ENCODE measurements at regions of chr20 and their contacts with region 1.

Region 1: DNA sequence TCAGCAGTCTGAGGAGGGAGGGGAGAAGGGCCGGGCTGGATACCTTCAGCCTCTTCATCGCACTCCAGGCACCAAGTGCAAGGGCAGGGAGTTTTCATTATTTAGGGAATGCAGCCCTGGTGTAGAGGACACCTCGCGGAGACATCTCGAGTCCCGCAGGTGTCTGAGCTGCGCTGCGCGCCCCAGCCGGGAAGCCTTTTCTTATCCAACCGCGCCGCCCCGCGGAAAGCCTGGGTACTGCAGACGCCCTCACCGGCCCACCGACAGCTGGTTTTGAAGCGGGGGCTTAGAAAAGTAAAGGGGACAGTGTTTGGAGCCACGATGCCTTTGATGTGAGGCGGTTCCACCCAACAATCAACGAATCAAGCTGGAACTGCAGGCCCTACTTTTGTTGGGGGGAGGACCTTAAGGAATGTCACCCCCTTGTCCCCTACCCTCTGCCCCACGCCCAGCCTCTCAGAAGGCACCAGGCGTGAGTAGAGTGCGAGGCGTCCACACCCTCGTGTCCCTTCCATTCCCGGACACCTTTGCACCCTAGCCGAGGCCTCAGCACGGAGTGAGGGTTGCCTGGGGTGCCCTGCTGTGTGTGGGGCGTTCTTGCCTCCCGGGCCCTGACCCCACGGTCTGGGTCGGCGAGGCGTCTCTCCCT is 8.6 kb downstream of the NKX2-2 start:
- DNase-seq: peak; percentile 51 to 86 (median 76)
- ATAC-seq: peak; percentile 82
- H3K4me3 ChIP-seq: peak overlapping the region; percentile 55
- H3K4me3 Mint-ChIP-seq: peak overlapping the region; percentile 53 to 80 (median 72)
- H3K27ac ChIP-seq: no peak overlapping the region
- H3K27ac Mint-ChIP-seq: peak overlapping the region in 2 of 9 donors; percentile 20 to 74
- H3K4me1 ChIP-seq: peaks cover 10 to 16% of the 10 kb centered on the region in 2 donors
- H3K4me1 Mint-ChIP-seq: peaks cover 0 to 40% (median 32%) of the 10 kb centered on the region in 7 donors
- H3K27me3 ChIP-seq: peaks cover 7 to 29% of the 10 kb centered on the region in 2 donors
- H3K27me3 Mint-ChIP-seq: peaks cover 52 to 60% (median 55%) of the 10 kb centered on the region in 5 donors

Region 2: GRCh38 chr20:20083807-20084206 is 1421.5 kb before region 1 on chr20:
- CTCF ChIA-PET with region 1: no interaction called
- POLR2A ChIA-PET with region 1: no interaction called
- intact Hi-C with region 1: loop called in 1 of 2 experiments (anchors 10 kb)
- DNase-seq: peak in 6 of 9 donors; percentile 4 to 64 (median 44)
- ATAC-seq: peak; percentile 74
- H3K4me3 ChIP-seq: no peak overlapping the region
- H3K4me3 Mint-ChIP-seq: peak overlapping the region in 7 of 10 donors; percentile 46 to 86 (median 72)
- H3K27ac ChIP-seq: no peak overlapping the region
- H3K27ac Mint-ChIP-seq: peak overlapping the region in 6 of 9 donors; percentile 23 to 80 (median 52)
- H3K4me1 ChIP-seq: no peaks in the 10 kb centered on the region
- H3K4me1 Mint-ChIP-seq: peaks cover 0 to 9% (median 8%) of the 10 kb centered on the region in 7 donors
- H3K27me3 ChIP-seq: no peaks in the 10 kb centered on the region
- H3K27me3 Mint-ChIP-seq: peaks cover 0 to 16% (median 9%) of the 10 kb centered on the region in 5 donors

Region 3: GRCh38 chr20:20780127-20780824 is 725.0 kb before region 1 on chr20:
- CTCF ChIA-PET with region 1: no interaction called
- POLR2A ChIA-PET with region 1: no interaction called
- intact Hi-C with region 1: no loop called
- DNase-seq: no peak
- ATAC-seq: peak; percentile 90
- H3K4me3 ChIP-seq: no peak overlapping the region
- H3K4me3 Mint-ChIP-seq: no peak overlapping the region
- H3K27ac ChIP-seq: no peak overlapping the region
- H3K27ac Mint-ChIP-seq: no peak overlapping the region
- H3K4me1 ChIP-seq: no peaks in the 10 kb centered on the region
- H3K4me1 Mint-ChIP-seq: peaks cover 0 to 2% (median 0%) of the 10 kb centered on the region in 7 donors
- H3K27me3 ChIP-seq: no peaks in the 10 kb centered on the region
- H3K27me3 Mint-ChIP-seq: peaks cover 0 to 14% (median 4%) of the 10 kb centered on the region in 5 donors

Region 4: GRCh38 chr20:20860078-20860806 is 645.0 kb before region 1 on chr20:
- CTCF ChIA-PET with region 1: interaction called, 23 read pairs
- POLR2A ChIA-PET with region 1: no interaction called
- intact Hi-C with region 1: no loop called
- DNase-seq: peak; percentile 44 to 80 (median 64)
- ATAC-seq: peak; percentile 81
- H3K4me3 ChIP-seq: no peak overlapping the region
- H3K4me3 Mint-ChIP-seq: no peak overlapping the region
- H3K27ac ChIP-seq: no peak overlapping the region
- H3K27ac Mint-ChIP-seq: no peak overlapping the region
- H3K4me1 ChIP-seq: no peaks in the 10 kb centered on the region
- H3K4me1 Mint-ChIP-seq: peaks cover 0 to 1% (median 0%) of the 10 kb centered on the region in 7 donors
- H3K27me3 ChIP-seq: no peaks in the 10 kb centered on the region
- H3K27me3 Mint-ChIP-seq: peaks cover 13 to 38% (median 31%) of the 10 kb centered on the region in 5 donors

Region 5: DNA sequence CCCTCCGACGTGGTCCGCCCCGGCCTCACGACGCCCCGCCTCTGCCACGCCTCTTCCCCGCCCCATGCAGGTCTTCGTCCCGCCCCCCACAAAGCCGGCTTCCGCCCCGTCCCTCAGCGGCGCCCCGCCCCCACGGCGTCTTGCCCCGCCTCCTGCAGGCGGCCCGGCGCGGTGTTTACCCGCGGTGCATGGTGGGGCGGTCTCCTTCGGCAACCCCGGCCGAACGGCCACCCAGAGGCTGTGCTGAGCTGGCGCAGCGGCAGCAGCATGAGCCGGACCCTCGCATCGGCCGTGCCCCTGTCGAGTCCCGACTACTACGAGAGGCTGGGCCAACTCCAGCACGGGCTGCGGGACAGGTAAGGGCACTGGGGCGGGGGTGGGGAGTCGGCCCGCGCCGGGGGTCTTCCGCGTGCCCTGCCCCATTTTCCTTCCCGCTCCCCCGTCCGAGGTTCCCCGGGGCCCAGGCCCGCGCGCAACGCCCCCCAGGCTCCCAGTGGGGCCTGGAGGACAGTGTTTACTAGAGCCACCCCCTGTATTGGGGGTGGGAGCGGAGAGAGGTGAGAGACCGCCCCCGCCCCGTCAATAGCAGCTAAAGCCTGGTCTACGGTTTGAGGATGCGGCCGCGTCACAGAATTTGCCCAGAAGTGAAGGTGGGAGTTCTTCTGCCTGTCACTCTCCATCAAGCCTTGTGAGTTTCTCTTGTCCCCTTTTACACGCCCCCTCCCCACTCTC is 379.3 kb before region 1 on chr20 and contains the start of gene KIZ:
- CTCF ChIA-PET with region 1: no interaction called
- POLR2A ChIA-PET with region 1: no interaction called
- intact Hi-C with region 1: loop called in 1 of 2 experiments (anchors 5 kb)
- DNase-seq: peak; percentile 93 to 100 (median 97)
- ATAC-seq: peak; percentile 100
- H3K4me3 ChIP-seq: peak within 1 kb of the TSS; percentile 56
- H3K4me3 Mint-ChIP-seq: peak within 1 kb of the TSS; percentile 86 to 98 (median 90)
- H3K27ac ChIP-seq: peak within 1 kb of the TSS; percentile 77
- H3K27ac Mint-ChIP-seq: peak within 1 kb of the TSS; percentile 70 to 97 (median 88)
- H3K4me1 ChIP-seq: peaks cover 10 to 16% of the 10 kb centered on the region in 2 donors
- H3K4me1 Mint-ChIP-seq: peaks cover 11 to 35% (median 21%) of the 10 kb centered on the region in 7 donors
- H3K27me3 ChIP-seq: no peaks in the 10 kb centered on the region
- H3K27me3 Mint-ChIP-seq: peaks cover 0 to 4% (median 0%) of the 10 kb centered on the region in 5 donors
- total RNA-seq, gene KIZ: 15.6 to 47.4 (median 32.5) TPM

Region 6: GRCh38 chr20:21361266-21361665 is 144.0 kb before region 1 on chr20:
- CTCF ChIA-PET with region 1: no interaction called
- POLR2A ChIA-PET with region 1: no interaction called
- intact Hi-C with region 1: no loop called
- DNase-seq: no peak
- ATAC-seq: peak; percentile 40
- H3K4me3 ChIP-seq: no peak overlapping the region
- H3K4me3 Mint-ChIP-seq: peak overlapping the region in 1 of 10 donors; percentile 12
- H3K27ac ChIP-seq: no peak overlapping the region
- H3K27ac Mint-ChIP-seq: peak overlapping the region in 3 of 9 donors; percentile 18 to 37 (median 36)
- H3K4me1 ChIP-seq: no peaks in the 10 kb centered on the region
- H3K4me1 Mint-ChIP-seq: peaks cover 0 to 17% (median 6%) of the 10 kb centered on the region in 7 donors
- H3K27me3 ChIP-seq: no peaks in the 10 kb centered on the region
- H3K27me3 Mint-ChIP-seq: no peaks in the 10 kb centered on the region

Region 7: DNA sequence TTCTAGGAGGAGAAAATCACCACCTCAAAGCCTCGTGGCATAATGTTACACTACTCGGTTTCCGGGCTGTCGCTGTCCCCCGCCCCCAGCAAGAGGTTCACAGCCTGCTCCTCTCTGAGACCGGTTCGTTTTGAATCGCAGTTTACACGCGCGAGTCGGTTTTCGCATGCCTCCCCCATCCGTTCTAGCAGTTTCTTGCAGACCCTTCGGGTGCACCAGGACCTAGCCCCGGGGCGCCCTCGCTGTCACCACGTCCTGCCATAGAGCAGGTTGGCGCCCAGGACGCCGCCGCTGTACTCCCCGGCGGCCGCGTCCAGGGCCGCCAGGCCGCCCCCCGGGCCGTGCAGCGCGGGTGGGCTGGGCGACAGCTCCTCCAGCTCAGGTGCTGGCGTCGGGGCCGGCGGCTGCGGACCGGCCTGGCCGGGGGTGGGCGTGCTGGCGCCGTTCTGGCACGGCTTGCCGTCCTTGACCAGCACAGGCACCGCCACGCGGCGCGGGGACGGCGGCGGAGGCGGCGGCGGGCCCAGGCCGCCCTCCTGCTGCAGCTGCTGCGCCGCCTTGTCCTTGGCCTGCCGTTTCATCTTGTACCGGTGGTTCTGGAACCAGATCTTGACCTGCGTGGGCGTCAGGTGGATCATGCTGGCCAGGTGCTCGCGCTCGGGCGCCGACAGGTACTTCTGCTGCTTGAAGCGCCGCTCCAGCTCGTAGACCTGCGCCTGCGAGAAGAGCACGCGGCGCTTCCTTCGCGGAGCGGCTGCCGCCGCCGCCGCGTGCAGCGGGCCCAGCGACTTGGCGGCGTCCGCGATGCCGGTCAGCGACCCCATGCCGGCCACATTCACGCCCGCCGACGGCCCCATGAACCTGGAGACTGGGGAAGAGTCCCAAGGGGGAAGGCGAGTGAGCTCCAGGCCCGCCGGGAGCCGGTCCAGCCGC is 109.4 kb before region 1 on chr20:
- CTCF ChIA-PET with region 1: no interaction called
- POLR2A ChIA-PET with region 1: no interaction called
- intact Hi-C with region 1: loop called (anchors 2 to 5 kb)
- DNase-seq: peak; percentile 21 to 77 (median 67)
- ATAC-seq: peak; percentile 86
- H3K4me3 ChIP-seq: no peak overlapping the region
- H3K4me3 Mint-ChIP-seq: peak overlapping the region; percentile 39 to 85 (median 76)
- H3K27ac ChIP-seq: no peak overlapping the region
- H3K27ac Mint-ChIP-seq: peak overlapping the region in 6 of 9 donors; percentile 16 to 76 (median 60)
- H3K4me1 ChIP-seq: peaks cover 0 to 16% of the 10 kb centered on the region in 2 donors
- H3K4me1 Mint-ChIP-seq: peaks cover 11 to 37% (median 30%) of the 10 kb centered on the region in 7 donors
- H3K27me3 ChIP-seq: peaks cover 43 to 63% of the 10 kb centered on the region in 2 donors
- H3K27me3 Mint-ChIP-seq: peaks cover 63 to 80% (median 75%) of the 10 kb centered on the region in 5 donors

Region 8: GRCh38 chr20:21571841-21572690 is 66.8 kb after region 1 on chr20:
- CTCF ChIA-PET with region 1: interaction called, 7 read pairs
- POLR2A ChIA-PET with region 1: no interaction called
- intact Hi-C with region 1: loop called in 1 of 2 experiments (anchors 1 kb)
- DNase-seq: peak in 4 of 9 donors; percentile 18 to 34 (median 29)
- ATAC-seq: peak; percentile 46
- H3K4me3 ChIP-seq: no peak overlapping the region
- H3K4me3 Mint-ChIP-seq: no peak overlapping the region
- H3K27ac ChIP-seq: no peak overlapping the region
- H3K27ac Mint-ChIP-seq: no peak overlapping the region
- H3K4me1 ChIP-seq: peaks cover 0 to 11% of the 10 kb centered on the region in 2 donors
- H3K4me1 Mint-ChIP-seq: peaks cover 0 to 12% (median 6%) of the 10 kb centered on the region in 7 donors
- H3K27me3 ChIP-seq: no peaks in the 10 kb centered on the region
- H3K27me3 Mint-ChIP-seq: peaks cover 16 to 37% (median 29%) of the 10 kb centered on the region in 5 donors

Region 9: DNA sequence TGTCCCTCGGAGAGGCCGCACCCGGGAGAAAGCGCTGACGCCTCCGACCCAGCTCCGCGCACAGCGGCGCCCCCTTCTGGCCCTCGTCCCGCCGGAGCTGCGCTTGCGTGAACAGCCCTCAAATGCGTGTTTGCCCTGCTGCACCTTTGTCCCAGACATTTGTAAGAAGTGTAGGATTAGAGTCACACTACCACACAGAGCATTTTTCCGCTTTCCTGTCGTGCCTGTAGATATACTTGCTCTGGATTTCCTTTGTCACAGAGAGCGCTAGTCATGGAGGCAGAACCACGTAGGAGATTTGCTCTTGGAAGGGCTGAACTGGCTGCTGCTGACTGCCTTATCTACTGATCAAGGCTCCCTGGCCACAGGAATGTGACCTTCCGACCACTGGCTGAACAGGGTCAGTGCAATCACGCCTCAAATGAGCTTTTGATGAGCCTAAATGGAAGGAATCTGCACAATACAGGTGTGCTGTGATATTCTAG is 262.5 kb after region 1 on chr20:
- CTCF ChIA-PET with region 1: no interaction called
- POLR2A ChIA-PET with region 1: no interaction called
- intact Hi-C with region 1: no loop called
- DNase-seq: no peak
- ATAC-seq: no peak
- H3K4me3 ChIP-seq: no peak overlapping the region
- H3K4me3 Mint-ChIP-seq: no peak overlapping the region
- H3K27ac ChIP-seq: no peak overlapping the region
- H3K27ac Mint-ChIP-seq: no peak overlapping the region
- H3K4me1 ChIP-seq: no peaks in the 10 kb centered on the region
- H3K4me1 Mint-ChIP-seq: no peaks in the 10 kb centered on the region
- H3K27me3 ChIP-seq: peaks cover 0 to 3% of the 10 kb centered on the region in 2 donors
- H3K27me3 Mint-ChIP-seq: peaks cover 0 to 12% (median 3%) of the 10 kb centered on the region in 5 donors

Region 10: GRCh38 chr20:22675341-22675740 is 1170.1 kb after region 1 on chr20:
- CTCF ChIA-PET with region 1: no interaction called
- POLR2A ChIA-PET with region 1: no interaction called
- intact Hi-C with region 1: no loop called
- DNase-seq: no peak
- ATAC-seq: no peak
- H3K4me3 ChIP-seq: no peak overlapping the region
- H3K4me3 Mint-ChIP-seq: no peak overlapping the region
- H3K27ac ChIP-seq: no peak overlapping the region
- H3K27ac Mint-ChIP-seq: no peak overlapping the region
- H3K4me1 ChIP-seq: no peaks in the 10 kb centered on the region
- H3K4me1 Mint-ChIP-seq: no peaks in the 10 kb centered on the region
- H3K27me3 ChIP-seq: no peaks in the 10 kb centered on the region
- H3K27me3 Mint-ChIP-seq: peaks cover 0 to 8% (median 6%) of the 10 kb centered on the region in 5 donors

Measured in naive thymus-derived CD4-positive, alpha-beta T cell (primary cell).